Activated CD4-positive, alpha-beta T cell treated with anti-CD3 and anti-CD28 coated beads for 36 hours (primary cell): ENCODE measurements at regions of chr16 and their contacts with region 1.

Region 1: GRCh38 chr16:89217388-89218191 is at the start of gene ZNF778:
- DNase-seq: peak; percentile 89
- ATAC-seq: peak; percentile 81
- H3K4me3 Mint-ChIP-seq: peak within 1 kb of the TSS; percentile 83
- H3K27ac Mint-ChIP-seq: peak within 1 kb of the TSS; percentile 93
- H3K4me1 Mint-ChIP-seq: peaks cover 19% of the 10 kb centered on the region
- H3K27me3 Mint-ChIP-seq: no peaks in the 10 kb centered on the region
- total RNA-seq, gene ZNF778: 4.7 to 5.0 TPM

Region 2: GRCh38 chr16:88706288-88706964 is 511.2 kb before region 1 on chr16 and contains the starts of genes CTU2 and RNF166:
- CTCF ChIA-PET with region 1: no interaction called
- POLR2A ChIA-PET with region 1: no interaction called
- intact Hi-C with region 1: loop called in 1 of 2 experiments (anchors 1 kb)
- DNase-seq: peak; percentile 96
- ATAC-seq: peak; percentile 59
- H3K4me3 Mint-ChIP-seq: peak within 1 kb of the TSS; percentile 92
- H3K27ac Mint-ChIP-seq: peak within 1 kb of the TSS; percentile 92
- H3K4me1 Mint-ChIP-seq: peaks cover 43% of the 10 kb centered on the region
- H3K27me3 Mint-ChIP-seq: no peaks in the 10 kb centered on the region
- total RNA-seq, gene CTU2: 29.6 to 36.2 TPM
- total RNA-seq, gene RNF166: 44.0 to 49.7 TPM

Region 3: GRCh38 chr16:88941913-88942909 is 275.4 kb before region 1 on chr16:
- CTCF ChIA-PET with region 1: no interaction called
- POLR2A ChIA-PET with region 1: no interaction called
- intact Hi-C with region 1: loop called (anchors 1 to 2 kb)
- DNase-seq: peak; percentile 79
- ATAC-seq: peak; percentile 86
- H3K4me3 Mint-ChIP-seq: no peak overlapping the region
- H3K27ac Mint-ChIP-seq: no peak overlapping the region
- H3K4me1 Mint-ChIP-seq: no peaks in the 10 kb centered on the region
- H3K27me3 Mint-ChIP-seq: peaks cover 18% of the 10 kb centered on the region

Region 4: DNA sequence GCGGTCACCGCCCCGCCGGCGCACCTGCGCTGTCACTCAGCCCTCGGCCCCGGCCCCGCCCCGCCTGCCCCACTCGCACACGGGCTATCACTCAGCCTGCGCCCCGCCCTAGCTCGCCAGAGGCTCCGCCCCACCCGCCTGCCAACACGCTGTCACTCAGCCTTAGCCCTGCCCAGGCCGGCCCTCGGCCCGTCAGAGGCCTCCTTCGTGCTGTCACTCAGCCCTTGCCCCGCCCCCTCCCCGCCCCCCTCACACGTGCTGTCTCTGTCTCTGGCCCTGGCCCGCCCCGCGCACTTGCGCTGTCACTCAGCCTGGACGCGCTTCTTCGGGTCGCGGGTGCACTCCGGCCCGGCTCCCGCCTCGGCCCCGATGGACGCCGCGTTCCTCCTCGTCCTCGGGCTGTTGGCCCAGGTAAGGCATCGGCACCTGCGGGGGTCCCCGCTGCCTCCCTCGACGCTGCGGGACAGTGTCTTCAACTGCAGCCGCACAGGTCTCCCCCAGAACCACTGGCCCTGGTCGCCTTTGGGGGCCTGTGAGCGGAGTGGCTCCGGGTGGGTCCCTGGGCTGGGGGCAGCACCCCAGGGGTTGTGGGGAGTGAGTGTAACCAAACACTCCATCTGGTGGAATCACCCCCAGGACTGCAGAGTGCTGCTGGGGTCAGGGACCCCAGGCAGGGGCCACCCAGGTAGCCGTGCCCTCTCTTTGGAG is 46.0 kb before region 1 on chr16 and contains the start of gene CDH15:
- CTCF ChIA-PET with region 1: interaction called, 3 read pairs
- POLR2A ChIA-PET with region 1: no interaction called
- intact Hi-C with region 1: loop called (anchors 1 to 2 kb)
- DNase-seq: peak; percentile 99
- ATAC-seq: peak; percentile 97
- H3K4me3 Mint-ChIP-seq: peak within 1 kb of the TSS; percentile 43
- H3K27ac Mint-ChIP-seq: peak within 1 kb of the TSS; percentile 38
- H3K4me1 Mint-ChIP-seq: peaks cover 7% of the 10 kb centered on the region
- H3K27me3 Mint-ChIP-seq: peaks cover 3% of the 10 kb centered on the region
- total RNA-seq, gene CDH15: not detected

Region 5: GRCh38 chr16:89241187-89242007 is 23.8 kb after region 1 on chr16:
- CTCF ChIA-PET with region 1: interaction called, 9 read pairs
- POLR2A ChIA-PET with region 1: no interaction called
- intact Hi-C with region 1: loop called (anchors 1 to 2 kb)
- DNase-seq: peak; percentile 83
- ATAC-seq: peak; percentile 83
- H3K4me3 Mint-ChIP-seq: peak overlapping the region; percentile 87
- H3K27ac Mint-ChIP-seq: peak overlapping the region; percentile 100
- H3K4me1 Mint-ChIP-seq: peaks cover 14% of the 10 kb centered on the region
- H3K27me3 Mint-ChIP-seq: no peaks in the 10 kb centered on the region

Region 6: DNA sequence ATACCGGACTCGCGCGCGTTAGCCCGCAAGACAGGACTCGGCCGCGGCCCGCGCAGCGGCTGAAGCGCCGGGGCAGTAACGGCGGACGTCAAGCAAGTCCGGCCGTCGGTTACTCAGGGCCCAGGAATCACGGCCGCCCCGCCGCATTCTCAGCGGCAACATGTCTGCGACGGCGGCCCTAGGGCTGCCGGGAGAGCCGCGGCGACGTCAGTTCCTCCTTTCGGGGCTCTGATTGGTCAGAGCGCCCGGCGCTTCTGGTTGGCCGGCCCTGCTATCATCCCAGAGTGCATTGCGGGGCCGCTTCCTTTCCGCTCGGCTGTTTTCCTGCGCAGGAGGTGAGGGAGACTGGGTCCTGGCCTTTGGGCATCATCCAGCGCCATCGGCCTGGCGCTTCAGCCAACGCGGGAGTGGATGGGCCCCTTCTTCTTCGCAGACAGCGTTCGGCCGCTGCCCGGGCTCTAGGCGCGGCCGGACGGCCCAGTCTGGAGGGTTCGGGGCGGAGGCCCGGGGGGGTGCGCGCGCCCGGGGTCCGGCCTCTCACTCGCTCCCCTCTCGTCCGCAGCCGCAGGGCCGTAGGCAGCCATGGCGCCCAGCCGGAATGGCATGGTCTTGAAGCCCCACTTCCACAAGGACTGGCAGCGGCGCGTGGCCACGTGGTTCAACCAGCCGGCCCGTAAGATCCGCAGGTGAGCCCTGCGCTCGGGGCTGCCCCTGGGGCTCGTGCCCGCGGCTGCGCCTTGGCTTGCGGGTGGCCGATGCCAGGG is 343.0 kb after region 1 on chr16 and contains the start of gene RPL13:
- CTCF ChIA-PET with region 1: no interaction called
- POLR2A ChIA-PET with region 1: no interaction called
- intact Hi-C with region 1: loop called in 1 of 2 experiments (anchors 1 kb)
- DNase-seq: peak; percentile 97
- ATAC-seq: peak; percentile 90
- H3K4me3 Mint-ChIP-seq: peak within 1 kb of the TSS; percentile 95
- H3K27ac Mint-ChIP-seq: peak within 1 kb of the TSS; percentile 99
- H3K4me1 Mint-ChIP-seq: peaks cover 46% of the 10 kb centered on the region
- H3K27me3 Mint-ChIP-seq: no peaks in the 10 kb centered on the region
- total RNA-seq, gene RPL13: 2,518 to 3,038 TPM